Colonic mucosa (tissue), 4 donors: ENCODE measurements at regions of chr10 and their contacts with region 1.

Region 1: DNA sequence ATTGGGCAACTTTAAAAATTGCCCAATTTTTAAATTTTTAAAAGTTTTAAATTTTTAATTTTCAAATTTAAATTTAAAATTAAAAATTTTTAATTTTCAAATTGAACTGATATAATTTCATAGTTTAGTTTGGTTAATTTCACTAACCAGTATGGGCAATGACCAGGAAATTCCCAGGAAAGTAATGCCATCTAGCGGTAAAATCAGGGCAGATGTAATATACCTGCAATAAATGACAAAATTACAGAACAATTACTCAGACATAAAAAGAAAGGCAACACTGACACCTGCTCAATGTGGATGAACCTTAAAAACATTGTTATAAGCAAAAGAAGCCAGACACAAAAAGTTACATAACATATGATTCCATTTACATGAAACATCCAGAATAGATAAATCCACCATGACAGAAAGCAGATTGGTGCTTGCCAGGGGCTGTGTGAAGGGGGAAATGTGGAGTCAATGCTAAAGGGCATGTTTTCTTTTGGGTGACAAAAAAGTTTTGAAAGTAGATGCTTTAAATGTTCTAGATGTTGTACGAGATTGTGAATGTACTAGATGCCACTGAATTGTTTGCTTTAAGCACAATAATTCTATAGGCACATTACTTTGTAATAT is 28.6 kb upstream of the SLC16A12 start:
- DNase-seq: peak; percentile 23
- H3K4me3 ChIP-seq: no peak overlapping the region
- H3K27ac ChIP-seq: no peak overlapping the region
- H3K4me1 ChIP-seq: no peaks in the 10 kb centered on the region
- H3K27me3 ChIP-seq: no peaks in the 10 kb centered on the region
- CTCF ChIP-seq: peak; percentile 58

Region 2: GRCh38 chr10:89427629-89428028 is 136.3 kb before region 1 on chr10:
- intact Hi-C with region 1: loop called (anchors 2 kb)
- DNase-seq: no peak
- H3K4me3 ChIP-seq: no peak overlapping the region
- H3K27ac ChIP-seq: no peak overlapping the region
- H3K4me1 ChIP-seq: no peaks in the 10 kb centered on the region
- H3K27me3 ChIP-seq: no peaks in the 10 kb centered on the region
- CTCF ChIP-seq: no peak

Region 3: DNA sequence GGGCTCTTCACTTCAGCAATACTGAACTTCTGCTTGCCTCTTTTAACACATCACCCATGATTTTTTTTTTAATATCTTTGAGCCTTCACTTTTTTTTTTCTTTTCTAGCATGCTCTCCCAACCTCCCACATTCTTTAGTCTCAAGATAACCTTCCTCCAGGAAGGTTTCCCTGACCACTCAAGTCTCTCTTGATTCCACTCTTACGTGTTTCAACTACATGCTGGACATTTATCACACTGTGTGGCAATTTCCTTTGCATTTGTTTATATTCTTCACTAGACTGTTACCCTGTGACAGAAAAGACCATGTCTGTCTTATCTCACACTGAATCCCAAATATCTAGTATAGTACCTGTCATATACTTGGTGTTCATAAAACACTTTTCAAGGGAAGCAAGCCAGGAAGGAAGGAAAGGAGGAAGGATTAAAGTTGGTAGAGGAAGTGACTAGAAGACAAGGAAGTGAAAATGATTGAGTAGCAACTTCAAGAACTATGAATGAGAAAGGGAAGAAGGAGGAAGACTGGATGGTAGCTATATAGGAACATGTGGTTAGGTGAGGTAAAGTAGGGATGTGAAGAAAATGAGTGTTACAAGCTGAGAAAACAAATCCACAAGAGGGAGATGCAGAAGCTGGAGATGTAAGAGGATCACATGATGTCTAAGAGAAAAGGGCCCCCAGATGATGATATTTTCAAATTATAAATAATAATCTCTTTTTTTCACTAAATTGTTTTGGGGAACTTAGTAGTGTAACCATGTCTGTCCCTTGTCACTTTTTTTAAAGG is 109.2 kb before region 1 on chr10:
- intact Hi-C with region 1: no loop called
- DNase-seq: no peak
- H3K4me3 ChIP-seq: no peak overlapping the region
- H3K27ac ChIP-seq: no peak overlapping the region
- H3K4me1 ChIP-seq: no peaks in the 10 kb centered on the region
- H3K27me3 ChIP-seq: peaks cover 5% of the 10 kb centered on the region
- CTCF ChIP-seq: no peak

Region 4: GRCh38 chr10:89466599-89467035 is 97.4 kb before region 1 on chr10:
- intact Hi-C with region 1: no loop called
- DNase-seq: no peak
- H3K4me3 ChIP-seq: no peak overlapping the region
- H3K27ac ChIP-seq: no peak overlapping the region
- H3K4me1 ChIP-seq: no peaks in the 10 kb centered on the region
- H3K27me3 ChIP-seq: no peaks in the 10 kb centered on the region
- CTCF ChIP-seq: no peak